CD8-positive, alpha-beta T cell (primary cell): ENCODE measurements at regions of chr10 and their contacts with region 1.

Region 1: DNA sequence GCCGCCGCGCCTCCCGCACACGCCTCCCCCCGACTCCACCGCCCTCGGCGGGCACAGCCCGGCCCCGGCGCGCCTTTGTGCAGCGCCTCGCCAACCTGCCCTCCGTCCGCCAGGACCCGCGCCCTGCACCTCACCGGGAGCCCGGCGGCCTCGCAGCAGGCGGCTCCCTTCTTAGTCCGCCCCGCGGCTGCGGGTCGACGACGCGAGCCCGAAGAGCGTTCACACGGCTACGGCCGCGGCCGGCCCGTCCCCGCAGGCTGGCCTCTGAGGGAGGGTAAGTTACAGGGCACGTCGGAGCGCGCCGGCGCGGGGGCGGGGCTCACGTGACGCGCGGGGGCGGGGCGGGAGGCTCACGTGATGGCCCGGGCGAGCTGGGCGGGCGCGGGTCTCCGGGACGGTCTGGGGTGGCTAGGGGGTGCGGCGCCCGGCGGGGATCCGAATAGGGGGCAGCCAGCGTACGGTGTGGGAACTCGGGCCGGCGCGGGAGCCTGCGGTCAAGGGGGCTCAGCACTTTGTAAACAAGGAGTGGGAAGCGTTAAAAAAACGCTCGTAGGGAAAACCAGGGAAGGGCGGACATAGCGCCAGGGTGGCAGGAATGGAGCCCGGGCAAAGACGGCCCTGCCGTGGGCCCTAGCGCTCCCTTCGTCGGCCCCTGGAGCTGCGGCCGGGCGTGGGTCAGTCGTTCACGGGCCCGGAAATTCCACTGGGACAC is at the start of gene ARHGAP12:
- DNase-seq: peak; percentile 70 to 92 (median 84)
- ATAC-seq: peak; percentile 67
- H3K4me3 ChIP-seq: peak within 1 kb of the TSS; percentile 90 to 95
- H3K4me3 Mint-ChIP-seq: peak within 1 kb of the TSS; percentile 94
- H3K27ac ChIP-seq: peak within 1 kb of the TSS; percentile 65 to 87
- H3K27ac Mint-ChIP-seq: peak within 1 kb of the TSS; percentile 83
- H3K4me1 ChIP-seq: peaks cover 41% of the 10 kb centered on the region
- H3K4me1 Mint-ChIP-seq: peaks cover 49% of the 10 kb centered on the region
- H3K27me3 ChIP-seq: no peaks in the 10 kb centered on the region
- H3K27me3 Mint-ChIP-seq: no peaks in the 10 kb centered on the region
- CTCF ChIP-seq: no peak
- total RNA-seq, gene ARHGAP12: 15.7 to 15.9 TPM

Region 2: DNA sequence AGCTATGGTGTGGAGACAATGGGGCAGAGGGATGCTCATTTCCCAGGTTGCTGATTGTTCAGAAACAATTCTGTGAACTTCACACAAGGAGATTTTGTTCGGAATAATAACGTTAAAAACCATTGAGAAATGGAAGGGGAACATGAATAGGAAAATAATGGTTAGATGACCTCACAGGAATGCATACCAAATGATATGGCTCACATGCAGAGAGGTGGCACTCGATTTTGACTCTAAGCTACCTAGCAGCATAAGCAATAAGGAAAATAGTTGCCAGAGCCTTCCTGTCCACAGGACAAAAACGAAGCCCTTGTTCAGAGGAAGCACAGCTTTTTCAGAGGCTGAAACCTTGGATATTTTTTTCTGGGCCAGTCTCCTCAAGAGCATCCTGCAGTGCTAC is 316.6 kb before region 1 on chr10:
- CTCF ChIA-PET with region 1: no interaction called
- POLR2A ChIA-PET with region 1: no interaction called
- intact Hi-C with region 1: no loop called
- DNase-seq: no peak
- ATAC-seq: no peak
- H3K4me3 ChIP-seq: no peak overlapping the region
- H3K4me3 Mint-ChIP-seq: no peak overlapping the region
- H3K27ac ChIP-seq: no peak overlapping the region
- H3K27ac Mint-ChIP-seq: no peak overlapping the region
- H3K4me1 ChIP-seq: no peaks in the 10 kb centered on the region
- H3K4me1 Mint-ChIP-seq: no peaks in the 10 kb centered on the region
- H3K27me3 ChIP-seq: peaks cover 0 to 2% of the 10 kb centered on the region in 2 experiments
- H3K27me3 Mint-ChIP-seq: peaks cover 30% of the 10 kb centered on the region
- CTCF ChIP-seq: no peak

Region 3: GRCh38 chr10:31836569-31837406 is 91.9 kb before region 1 on chr10:
- CTCF ChIA-PET with region 1: no interaction called
- POLR2A ChIA-PET with region 1: no interaction called
- intact Hi-C with region 1: no loop called
- DNase-seq: peak in 2 of 9 experiments; percentile 4 to 14
- ATAC-seq: no peak
- H3K4me3 ChIP-seq: no peak overlapping the region
- H3K4me3 Mint-ChIP-seq: no peak overlapping the region
- H3K27ac ChIP-seq: peak overlapping the region in 1 of 2 experiments; percentile 15
- H3K27ac Mint-ChIP-seq: no peak overlapping the region
- H3K4me1 ChIP-seq: no peaks in the 10 kb centered on the region
- H3K4me1 Mint-ChIP-seq: peaks cover 8% of the 10 kb centered on the region
- H3K27me3 ChIP-seq: no peaks in the 10 kb centered on the region
- H3K27me3 Mint-ChIP-seq: no peaks in the 10 kb centered on the region
- CTCF ChIP-seq: peak; percentile 21

Region 4: GRCh38 chr10:32005050-32005449 is 76.3 kb after region 1 on chr10:
- CTCF ChIA-PET with region 1: interaction called, 4 read pairs
- POLR2A ChIA-PET with region 1: interaction called, 3 read pairs
- intact Hi-C with region 1: loop called (anchors 5 kb)
- DNase-seq: peak in 5 of 9 experiments; percentile 16 to 69 (median 39)
- ATAC-seq: peak; percentile 80
- H3K4me3 ChIP-seq: no peak overlapping the region
- H3K4me3 Mint-ChIP-seq: no peak overlapping the region
- H3K27ac ChIP-seq: no peak overlapping the region
- H3K27ac Mint-ChIP-seq: peak overlapping the region; percentile 47
- H3K4me1 ChIP-seq: no peaks in the 10 kb centered on the region
- H3K4me1 Mint-ChIP-seq: peaks cover 4% of the 10 kb centered on the region
- H3K27me3 ChIP-seq: no peaks in the 10 kb centered on the region
- H3K27me3 Mint-ChIP-seq: no peaks in the 10 kb centered on the region
- CTCF ChIP-seq: peak; percentile 55

Region 5: DNA sequence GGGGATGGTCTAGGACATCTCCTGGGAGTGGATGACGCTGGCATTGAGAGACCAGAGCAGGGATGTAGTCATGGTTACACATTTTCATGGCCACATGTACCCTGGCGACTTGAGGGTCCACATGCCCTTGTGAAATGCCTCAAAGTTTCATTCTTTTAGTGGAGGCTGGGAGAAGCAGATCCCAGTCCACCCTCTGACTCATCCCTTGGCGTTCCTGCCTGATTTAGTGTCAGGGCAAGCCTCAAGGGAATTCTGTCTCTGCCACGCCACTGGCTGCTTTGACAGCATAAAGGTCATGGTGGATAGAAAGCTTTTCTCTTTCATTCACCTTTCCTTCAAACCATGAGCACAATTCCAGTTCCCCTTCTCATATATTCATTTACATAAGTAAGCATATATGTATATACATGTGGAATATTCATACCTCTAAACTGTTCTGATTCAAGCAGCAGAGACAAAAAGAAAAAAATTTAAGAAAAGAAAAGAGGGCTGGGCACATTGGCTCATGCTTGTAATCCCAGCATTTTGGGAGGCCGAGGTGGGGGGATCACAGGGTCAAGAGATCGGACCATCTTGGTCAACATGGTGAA is 149.3 kb after region 1 on chr10:
- CTCF ChIA-PET with region 1: no interaction called
- POLR2A ChIA-PET with region 1: no interaction called
- intact Hi-C with region 1: no loop called
- DNase-seq: no peak
- ATAC-seq: no peak
- H3K4me3 ChIP-seq: no peak overlapping the region
- H3K4me3 Mint-ChIP-seq: no peak overlapping the region
- H3K27ac ChIP-seq: no peak overlapping the region
- H3K27ac Mint-ChIP-seq: no peak overlapping the region
- H3K4me1 ChIP-seq: no peaks in the 10 kb centered on the region
- H3K4me1 Mint-ChIP-seq: no peaks in the 10 kb centered on the region
- H3K27me3 ChIP-seq: no peaks in the 10 kb centered on the region
- H3K27me3 Mint-ChIP-seq: no peaks in the 10 kb centered on the region
- CTCF ChIP-seq: no peak